Right lobe of liver (tissue), 6 donors: ENCODE measurements at regions of chr10 and their contacts with region 1.

Region 1: GRCh38 chr10:26556748-26557640 is 118.9 kb downstream of the APBB1IP start:
- DNase-seq: no peak
- ATAC-seq: peak; percentile 70 to 84 (median 74)
- H3K4me3 ChIP-seq: no peak overlapping the region
- H3K27ac ChIP-seq: peak overlapping the region; percentile 50 to 75 (median 71)
- H3K4me1 ChIP-seq: peaks cover 0 to 24% (median 5%) of the 10 kb centered on the region in 4 donors
- H3K27me3 ChIP-seq: no peaks in the 10 kb centered on the region
- CTCF ChIP-seq: peak; percentile 77 to 89 (median 81)
- POLR2A ChIP-seq: no peak

Region 2: GRCh38 chr10:26334932-26335573 is 221.9 kb before region 1 on chr10:
- intact Hi-C with region 1: loop called in 1 of 2 experiments (anchors 10 kb)
- DNase-seq: peak; percentile 37 to 61 (median 60)
- ATAC-seq: peak; percentile 95 to 98 (median 96)
- H3K4me3 ChIP-seq: peak overlapping the region in 2 of 3 donors; percentile 1 to 30
- H3K27ac ChIP-seq: no peak overlapping the region
- H3K4me1 ChIP-seq: peaks cover 0 to 6% (median 0%) of the 10 kb centered on the region in 4 donors
- H3K27me3 ChIP-seq: no peaks in the 10 kb centered on the region
- CTCF ChIP-seq: peak; percentile 62 to 95 (median 76)
- POLR2A ChIP-seq: no peak

Region 3: DNA sequence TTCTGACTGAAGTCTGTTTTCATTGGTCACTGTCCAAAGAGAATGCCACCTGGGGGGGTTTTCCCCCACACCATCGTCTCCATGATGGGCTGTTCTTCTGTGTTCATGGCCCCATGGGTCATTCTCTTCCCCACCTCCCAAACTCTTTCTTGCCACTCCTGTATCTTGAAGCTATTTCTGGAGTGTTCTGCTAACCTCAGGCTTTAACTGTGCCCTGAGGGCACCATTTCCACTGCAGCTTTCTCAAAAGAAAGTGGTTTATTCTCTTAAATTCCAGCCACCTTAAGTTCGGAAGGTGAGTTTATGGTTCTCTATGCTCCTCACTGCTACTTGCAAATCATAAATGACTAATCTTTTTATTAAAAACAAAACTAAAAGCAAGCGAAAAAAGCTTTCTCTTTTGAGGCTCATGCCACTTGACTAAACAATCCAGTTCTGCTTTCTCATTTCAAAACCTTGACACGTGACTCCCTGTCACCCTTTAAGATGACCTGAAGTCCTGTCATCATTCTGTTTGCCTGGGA is 126.3 kb before region 1 on chr10:
- intact Hi-C with region 1: no loop called
- DNase-seq: no peak
- ATAC-seq: peak; percentile 27 to 75 (median 56)
- H3K4me3 ChIP-seq: no peak overlapping the region
- H3K27ac ChIP-seq: peak overlapping the region in 1 of 3 donors; percentile 7
- H3K4me1 ChIP-seq: peaks cover 0 to under 1% (median 0%) of the 10 kb centered on the region in 4 donors
- H3K27me3 ChIP-seq: no peaks in the 10 kb centered on the region
- CTCF ChIP-seq: no peak
- POLR2A ChIP-seq: no peak